PC-9 (cell line): ENCODE measurements at regions of chr14 and their contacts with region 1.

Region 1: DNA sequence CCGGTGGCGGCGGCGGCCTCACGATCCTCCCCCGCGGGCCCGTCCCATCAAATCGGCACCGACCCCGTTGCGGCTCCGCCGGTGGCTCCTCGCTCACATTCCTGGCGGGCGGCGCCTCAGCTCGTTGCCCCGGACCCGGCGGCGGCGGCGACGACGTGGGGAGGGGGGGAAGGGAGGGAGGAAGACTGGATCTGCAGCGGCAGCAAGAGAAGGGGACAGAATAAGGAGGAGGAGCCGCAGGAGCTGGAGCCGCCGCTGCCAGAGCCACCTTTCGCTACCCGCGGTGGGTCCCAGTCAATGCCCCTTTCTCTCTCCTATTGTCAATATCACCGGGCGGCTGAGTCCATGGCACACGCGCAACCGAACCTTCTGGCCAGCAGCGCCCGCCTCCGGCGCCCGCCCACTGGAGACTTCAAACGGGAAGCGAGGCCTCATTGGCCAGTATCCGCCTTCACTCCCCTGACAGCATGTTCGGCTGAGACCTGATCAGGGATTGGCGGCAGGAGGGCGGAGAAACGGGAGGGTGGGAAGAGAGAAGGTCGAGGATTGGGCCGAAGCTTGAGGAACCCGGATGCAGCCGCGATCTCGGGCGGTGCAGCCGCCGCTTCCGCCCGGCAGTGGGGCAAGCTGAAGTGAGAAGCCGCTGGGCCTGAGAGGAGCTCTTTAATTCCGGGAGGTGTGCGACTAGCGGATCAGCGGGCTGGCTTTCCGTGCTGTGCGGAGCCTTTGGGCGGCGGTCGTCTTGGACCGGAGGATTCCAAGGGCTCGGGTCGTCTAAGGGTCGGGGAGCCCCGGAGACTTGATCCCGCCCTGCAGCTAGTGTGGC is at the start of gene PPP2R5E:
- DNase-seq: peak; percentile 97 to 99
- H3K4me3 ChIP-seq: peak within 1 kb of the TSS; percentile 82
- H3K27ac ChIP-seq: peak within 1 kb of the TSS; percentile 22
- H3K4me1 ChIP-seq: peaks cover 22% of the 10 kb centered on the region
- H3K27me3 ChIP-seq: no peaks in the 10 kb centered on the region
- CTCF ChIP-seq: no peak
- total RNA-seq, gene PPP2R5E: 66.4 and 67.0 TPM in 2 replicates

Region 2: DNA sequence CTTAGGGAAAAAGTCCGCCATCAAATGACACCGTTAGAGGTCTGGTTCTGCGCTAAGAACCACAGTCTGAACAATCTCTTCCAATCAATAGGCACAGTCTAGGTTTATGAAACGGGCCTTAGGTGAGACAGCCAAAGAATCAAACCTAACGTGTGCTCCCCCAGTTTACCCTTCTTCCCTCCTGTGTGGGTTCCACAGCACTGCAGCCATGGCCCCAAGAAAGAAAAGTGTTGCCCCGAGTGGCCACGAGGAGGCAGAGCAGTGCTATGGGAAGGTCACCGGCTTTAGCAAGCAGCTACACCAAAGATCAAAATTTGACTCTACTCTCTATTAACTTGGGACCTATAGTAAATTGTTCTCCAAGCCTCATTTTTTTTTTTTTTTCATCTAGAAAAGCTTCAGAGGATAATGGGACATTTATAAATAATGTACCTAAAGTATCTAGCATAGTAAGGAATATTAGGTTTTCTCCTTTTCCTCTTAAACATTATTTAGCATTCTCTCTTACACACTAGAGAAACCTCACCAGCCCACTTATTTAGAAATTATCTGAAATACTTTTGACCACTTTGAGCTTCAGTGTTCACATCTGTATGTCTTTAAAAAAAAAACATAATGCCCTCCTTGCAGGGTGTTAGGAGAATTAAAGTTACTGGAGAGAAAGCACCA is 154.3 kb before region 1 on chr14:
- CTCF ChIA-PET with region 1: interaction called, 6 read pairs
- POLR2A ChIA-PET with region 1: no interaction called
- intact Hi-C with region 1: loop called (anchors 2 kb)
- DNase-seq: peak in 1 of 2 experiments; percentile 57
- H3K4me3 ChIP-seq: no peak overlapping the region
- H3K27ac ChIP-seq: no peak overlapping the region
- H3K4me1 ChIP-seq: no peaks in the 10 kb centered on the region
- H3K27me3 ChIP-seq: no peaks in the 10 kb centered on the region
- CTCF ChIP-seq: peak; percentile 84

Region 3: GRCh38 chr14:63437953-63438757 is 105.1 kb before region 1 on chr14:
- CTCF ChIA-PET with region 1: interaction called, 5 read pairs
- POLR2A ChIA-PET with region 1: interaction called, 6 read pairs
- intact Hi-C with region 1: loop called (anchors 1 kb)
- DNase-seq: peak; percentile 91 to 96
- H3K4me3 ChIP-seq: peak overlapping the region; percentile 53; the same call in 1 of the 2 replicates
- H3K27ac ChIP-seq: peak overlapping the region; percentile 79
- H3K4me1 ChIP-seq: peaks cover 37% of the 10 kb centered on the region
- H3K27me3 ChIP-seq: no peaks in the 10 kb centered on the region
- CTCF ChIP-seq: peak; percentile 39; the same call in 1 of the 2 replicates

Region 4: DNA sequence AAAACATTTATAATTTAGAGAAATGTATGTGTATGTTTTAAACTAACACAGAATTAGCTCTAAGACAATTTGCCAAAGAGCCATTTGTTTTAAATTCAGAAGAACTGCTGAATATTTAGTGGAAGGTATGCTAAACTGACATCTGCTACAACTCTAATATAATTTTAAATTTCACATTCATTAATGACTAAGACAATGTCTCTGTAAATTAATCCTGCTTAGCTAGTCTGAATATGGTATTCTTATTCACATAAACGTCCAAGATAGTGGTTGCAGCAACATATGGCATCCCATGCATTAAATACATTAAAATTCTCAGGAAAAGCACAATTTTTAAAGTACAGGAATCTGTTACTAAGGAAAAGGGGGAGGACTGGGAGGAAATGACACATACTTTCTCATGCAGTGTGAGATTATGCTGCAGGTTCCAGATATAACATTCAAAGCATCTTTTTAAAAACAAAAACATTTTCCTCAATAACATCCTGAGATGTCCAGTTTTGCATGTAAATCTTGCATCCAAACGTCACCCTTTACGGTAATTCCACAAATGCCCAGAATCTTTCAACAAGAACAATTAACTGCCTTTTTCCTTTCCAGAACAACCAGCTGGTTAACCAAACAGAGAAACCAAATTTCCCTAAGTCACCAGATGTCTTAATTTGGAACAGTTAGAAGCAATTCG is 71.6 kb after region 1 on chr14:
- CTCF ChIA-PET with region 1: interaction called, 5 read pairs
- POLR2A ChIA-PET with region 1: no interaction called
- intact Hi-C with region 1: loop called (anchors 5 kb)
- DNase-seq: no peak
- H3K4me3 ChIP-seq: no peak overlapping the region
- H3K27ac ChIP-seq: no peak overlapping the region
- H3K4me1 ChIP-seq: no peaks in the 10 kb centered on the region
- H3K27me3 ChIP-seq: no peaks in the 10 kb centered on the region
- CTCF ChIP-seq: no peak

Region 5: DNA sequence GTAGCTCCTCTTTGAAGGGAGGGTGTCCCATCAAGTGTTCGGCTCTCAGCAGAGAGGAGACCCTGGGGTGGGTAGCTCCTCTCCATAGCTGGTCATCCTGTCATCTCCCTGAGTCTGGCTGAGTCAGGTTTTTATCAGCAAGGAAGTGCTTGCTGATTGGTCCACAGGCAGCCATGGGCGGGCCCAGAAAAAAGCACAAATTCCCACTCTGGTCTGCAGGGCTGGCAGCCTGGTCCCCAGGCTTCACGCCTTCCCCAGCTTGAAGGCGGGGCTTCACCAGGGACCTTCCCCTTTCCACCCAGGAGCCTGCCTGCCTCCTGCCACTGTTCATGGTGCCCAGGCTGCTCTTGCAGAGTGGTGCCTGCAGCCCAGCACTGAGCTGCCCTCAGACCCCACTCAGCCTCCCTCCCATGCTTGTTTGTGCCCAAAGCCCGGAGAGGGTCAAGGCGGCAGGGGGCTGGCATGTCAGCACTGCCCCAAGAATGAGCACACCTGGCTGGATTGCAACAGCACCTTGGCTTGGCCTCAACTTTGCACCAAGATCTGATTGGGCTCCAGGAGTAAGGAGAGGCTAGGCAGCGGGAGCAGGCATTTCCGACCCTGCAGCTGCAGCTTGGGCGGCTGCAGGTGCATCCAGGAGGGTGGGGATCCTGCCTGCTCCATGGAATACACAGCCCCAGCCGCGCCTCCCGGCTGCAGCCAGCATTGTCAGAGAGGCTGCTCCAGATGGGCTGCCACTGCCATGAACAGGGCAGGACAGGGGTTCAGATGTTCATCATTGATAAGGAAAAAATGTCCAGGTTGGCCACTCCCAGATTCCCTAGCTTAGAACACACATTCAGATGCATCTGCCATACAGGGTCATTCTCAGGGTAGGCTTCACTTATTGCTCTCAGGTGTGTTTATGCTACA is 120.5 kb after region 1 on chr14:
- CTCF ChIA-PET with region 1: interaction called, 3 read pairs
- POLR2A ChIA-PET with region 1: interaction called, 10 read pairs
- intact Hi-C with region 1: no loop called
- DNase-seq: peak; percentile 88 to 91
- H3K4me3 ChIP-seq: no peak overlapping the region
- H3K27ac ChIP-seq: peak overlapping the region; percentile 39
- H3K4me1 ChIP-seq: peaks cover 47% of the 10 kb centered on the region
- H3K27me3 ChIP-seq: no peaks in the 10 kb centered on the region
- CTCF ChIP-seq: no peak

Region 6: GRCh38 chr14:63795532-63795931 is 252.3 kb after region 1 on chr14:
- CTCF ChIA-PET with region 1: interaction called, 3 read pairs
- POLR2A ChIA-PET with region 1: no interaction called
- intact Hi-C with region 1: loop called (anchors 10 kb)
- DNase-seq: no peak
- H3K4me3 ChIP-seq: no peak overlapping the region
- H3K27ac ChIP-seq: no peak overlapping the region
- H3K4me1 ChIP-seq: 0 out of 2 replicates have a peak, but pooled peaks cover 4% of the 10 kb centered on the region
- H3K27me3 ChIP-seq: no peaks in the 10 kb centered on the region
- CTCF ChIP-seq: no peak

Region 7: DNA sequence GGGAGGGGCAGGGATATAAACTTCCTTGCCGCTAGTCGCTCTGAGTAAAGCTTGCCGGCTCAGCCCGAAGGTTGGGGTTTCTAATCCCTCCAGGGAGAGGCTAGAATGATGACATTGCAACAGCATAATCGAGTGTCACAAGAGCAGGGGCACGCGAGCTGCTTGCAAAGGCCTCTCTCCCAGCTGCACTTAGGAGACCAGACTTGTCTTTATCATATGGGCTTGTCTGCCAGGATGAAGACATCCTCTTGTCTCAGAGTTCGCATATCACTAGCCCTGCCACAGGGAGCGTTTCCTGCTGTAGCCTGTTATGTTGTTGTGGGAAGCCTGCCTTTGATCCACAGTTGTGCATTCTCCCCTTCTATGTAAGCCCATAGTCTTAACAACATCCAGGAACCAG is 571.0 kb after region 1 on chr14:
- CTCF ChIA-PET with region 1: no interaction called
- POLR2A ChIA-PET with region 1: no interaction called
- intact Hi-C with region 1: no loop called
- DNase-seq: no peak
- H3K4me3 ChIP-seq: no peak overlapping the region
- H3K27ac ChIP-seq: no peak overlapping the region
- H3K4me1 ChIP-seq: peaks cover 18% of the 10 kb centered on the region
- H3K27me3 ChIP-seq: no peaks in the 10 kb centered on the region
- CTCF ChIP-seq: no peak